Heart right ventricle (tissue), 16 donors: ENCODE measurements at regions of chr2 and their contacts with region 1.

Region 1: GRCh38 chr2:158045362-158045761 is 56.3 kb upstream of the UPP2 start:
- DNase-seq: no peak
- ATAC-seq: no peak
- H3K4me3 ChIP-seq: no peak overlapping the region
- H3K27ac ChIP-seq: no peak overlapping the region
- H3K4me1 ChIP-seq: peaks cover 0 to 34% (median 13%) of the 10 kb centered on the region in 9 donors
- H3K27me3 ChIP-seq: no peaks in the 10 kb centered on the region
- CTCF ChIP-seq: no peak

Region 2: GRCh38 chr2:158006961-158007719 is 38.2 kb before region 1 on chr2:
- intact Hi-C with region 1: no loop called
- DNase-seq: no peak
- ATAC-seq: peak in 1 of 8 donors; percentile 74
- H3K4me3 ChIP-seq: no peak overlapping the region
- H3K27ac ChIP-seq: no peak overlapping the region
- H3K4me1 ChIP-seq: peaks cover 0 to 10% (median 3%) of the 10 kb centered on the region in 9 donors
- H3K27me3 ChIP-seq: no peaks in the 10 kb centered on the region
- CTCF ChIP-seq: peak in 1 of 9 donors; percentile 22

Region 3: GRCh38 chr2:158113741-158114295 is 68.5 kb after region 1 on chr2:
- intact Hi-C with region 1: no loop called
- DNase-seq: no peak
- ATAC-seq: no peak
- H3K4me3 ChIP-seq: no peak overlapping the region
- H3K27ac ChIP-seq: peak overlapping the region in 1 of 10 donors; percentile 31
- H3K4me1 ChIP-seq: peaks cover 0 to 10% (median 0%) of the 10 kb centered on the region in 9 donors
- H3K27me3 ChIP-seq: no peaks in the 10 kb centered on the region
- CTCF ChIP-seq: no peak

Region 4: DNA sequence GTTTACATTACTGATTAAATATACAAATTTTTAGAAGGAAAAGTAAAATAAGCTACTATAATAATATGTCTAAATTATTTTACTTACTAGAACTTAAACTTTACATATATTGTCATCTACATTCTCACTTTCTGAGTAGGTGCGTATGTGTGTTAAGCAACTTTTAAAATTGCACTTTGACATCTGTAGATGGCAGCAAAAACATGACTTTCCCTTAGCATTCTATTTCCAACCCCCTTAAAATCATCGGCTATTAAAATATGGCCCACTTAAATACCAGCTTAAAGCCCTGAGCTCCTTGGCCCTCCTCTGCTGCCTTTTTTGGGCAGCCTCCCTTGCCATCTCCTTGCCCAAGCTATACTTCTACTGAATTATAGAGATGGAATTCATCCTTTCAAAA is 134.3 kb after region 1 on chr2:
- intact Hi-C with region 1: loop called in 1 of 10 experiments (anchors 10 kb)
- DNase-seq: no peak
- ATAC-seq: peak in 6 of 8 donors; percentile 23 to 75 (median 51)
- H3K4me3 ChIP-seq: no peak overlapping the region
- H3K27ac ChIP-seq: no peak overlapping the region
- H3K4me1 ChIP-seq: peaks cover 0 to 18% (median 4%) of the 10 kb centered on the region in 9 donors
- H3K27me3 ChIP-seq: peaks cover 0 to 3% (median 0%) of the 10 kb centered on the region in 7 donors
- CTCF ChIP-seq: peak in 7 of 9 donors; percentile 44 to 66 (median 60)

Region 5: GRCh38 chr2:158191076-158191895 is 145.9 kb after region 1 on chr2:
- intact Hi-C with region 1: no loop called
- DNase-seq: peak in 1 of 2 donors; percentile 13
- ATAC-seq: peak in 5 of 8 donors; percentile 52 to 78 (median 65)
- H3K4me3 ChIP-seq: peak overlapping the region in 6 of 10 donors; percentile 4 to 36 (median 28)
- H3K27ac ChIP-seq: peak overlapping the region in 6 of 10 donors; percentile 1 to 77 (median 52)
- H3K4me1 ChIP-seq: peaks cover 0 to 23% (median 7%) of the 10 kb centered on the region in 9 donors
- H3K27me3 ChIP-seq: no peaks in the 10 kb centered on the region
- CTCF ChIP-seq: no peak